Mammary epithelial cell (primary cell): ENCODE measurements at regions of chr11 and their contacts with region 1.

Region 1: GRCh38 chr11:44936525-44936924 is 14.2 kb downstream of the TP53I11 start:
- DNase-seq: peak; percentile 50
- H3K4me3 ChIP-seq: no peak overlapping the region
- H3K27ac ChIP-seq: no peak overlapping the region
- H3K4me1 ChIP-seq: no peaks in the 10 kb centered on the region
- H3K27me3 ChIP-seq: no peaks in the 10 kb centered on the region
- CTCF ChIP-seq: peak; percentile 82 to 94

Region 2: GRCh38 chr11:44952500-44953260 is 16.2 kb after region 1 on chr11:
- CTCF ChIA-PET with region 1: interaction called, 13 read pairs
- dilution Hi-C with region 1: no loop called
- in situ Hi-C with region 1: no loop called
- intact Hi-C with region 1: no loop called
- DNase-seq: no peak
- H3K4me3 ChIP-seq: no peak overlapping the region
- H3K27ac ChIP-seq: no peak overlapping the region
- H3K4me1 ChIP-seq: peaks cover 14% of the 10 kb centered on the region
- H3K27me3 ChIP-seq: no peaks in the 10 kb centered on the region
- CTCF ChIP-seq: no peak

Region 3: DNA sequence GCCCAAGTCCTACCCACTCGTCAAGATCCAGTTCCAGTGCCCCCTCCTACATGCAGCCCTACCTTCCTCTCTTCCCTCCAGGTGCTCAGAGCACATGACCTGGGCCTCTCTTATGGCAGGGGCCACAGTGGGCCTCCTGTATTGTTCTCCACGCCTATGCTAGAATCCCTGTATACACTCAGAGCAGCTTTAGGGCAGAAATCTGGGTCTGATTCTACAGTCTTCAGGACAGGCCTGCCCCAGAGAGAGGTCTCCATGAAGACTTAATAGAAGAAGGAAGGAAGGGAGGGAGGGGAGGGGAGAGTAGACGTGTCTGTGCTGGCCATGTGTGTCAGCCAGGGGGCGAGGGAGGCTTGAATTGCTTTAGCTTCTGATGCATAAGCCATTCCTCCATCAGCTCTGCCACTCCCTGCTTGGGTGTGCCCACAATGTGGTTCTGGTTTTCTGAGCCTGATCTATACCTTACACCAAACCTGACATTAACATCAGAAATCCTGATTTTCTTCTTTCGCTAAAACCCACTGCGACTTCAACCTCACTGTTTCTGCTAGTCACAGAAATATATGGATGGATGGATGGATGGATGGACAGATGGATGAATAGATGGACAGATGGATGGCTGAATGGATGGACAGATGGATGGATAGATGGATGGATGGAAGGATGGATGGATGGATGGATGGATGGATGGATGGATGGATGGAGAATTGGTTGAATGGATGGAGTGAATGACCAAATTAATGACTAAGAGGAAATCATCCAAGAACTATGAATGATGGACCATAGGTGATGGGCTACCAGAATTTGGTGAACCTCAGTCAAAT is 153.4 kb after region 1 on chr11:
- CTCF ChIA-PET with region 1: interaction called, 10 read pairs
- dilution Hi-C with region 1: loop called (anchors 5 kb)
- in situ Hi-C with region 1: loop called in 1 of 2 experiments (anchors 5 kb)
- intact Hi-C with region 1: loop called (anchors 1 kb)
- DNase-seq: peak; percentile 40
- H3K4me3 ChIP-seq: no peak overlapping the region
- H3K27ac ChIP-seq: peak overlapping the region; percentile 15
- H3K4me1 ChIP-seq: peaks cover 16% of the 10 kb centered on the region
- H3K27me3 ChIP-seq: no peaks in the 10 kb centered on the region
- CTCF ChIP-seq: peak in 1 of 2 donors; percentile 24

Region 4: GRCh38 chr11:45097721-45098493 is 161.4 kb after region 1 on chr11:
- CTCF ChIA-PET with region 1: interaction called, 7 read pairs
- dilution Hi-C with region 1: loop called (anchors 5 kb)
- in situ Hi-C with region 1: loop called in 1 of 2 experiments (anchors 5 kb)
- intact Hi-C with region 1: loop called (anchors 1 kb)
- DNase-seq: peak; percentile 51
- H3K4me3 ChIP-seq: no peak overlapping the region
- H3K27ac ChIP-seq: no peak overlapping the region
- H3K4me1 ChIP-seq: peaks cover 20% of the 10 kb centered on the region
- H3K27me3 ChIP-seq: no peaks in the 10 kb centered on the region
- CTCF ChIP-seq: no peak

Region 5: DNA sequence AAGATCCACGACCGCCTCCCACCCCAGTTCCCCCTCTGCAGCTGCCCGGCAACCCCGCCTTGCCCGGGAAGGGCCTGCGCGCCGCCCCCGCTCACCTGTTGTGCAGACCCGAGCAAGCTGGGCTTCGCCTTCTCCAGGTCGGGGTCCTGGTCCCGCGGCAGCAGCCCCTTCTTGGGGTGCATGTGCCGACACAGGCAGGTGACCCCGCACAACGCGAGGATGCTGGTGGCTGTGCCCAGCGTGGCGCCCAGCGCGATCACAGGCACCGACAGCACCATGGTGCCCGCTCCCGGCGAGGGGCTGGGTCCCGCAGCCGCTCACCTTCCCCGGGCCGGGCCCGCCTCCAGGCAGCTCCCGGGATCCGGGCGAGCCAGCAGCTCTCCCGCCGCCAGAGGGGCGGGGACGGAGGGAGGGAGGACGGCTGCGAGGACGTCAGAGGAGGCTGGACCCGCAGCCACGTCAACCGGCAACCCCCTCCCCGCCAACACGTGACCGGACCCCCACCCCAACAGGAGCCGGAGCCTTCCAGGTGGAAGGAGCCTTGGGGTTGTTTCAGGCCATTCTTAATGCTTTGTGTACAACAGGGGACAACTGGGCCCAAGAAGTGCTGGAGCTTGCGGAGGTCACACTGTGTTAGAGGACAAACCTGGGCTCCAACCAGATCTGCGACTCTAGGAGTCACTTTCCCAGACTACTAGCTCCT is 349.6 kb after region 1 on chr11 and contains the start of gene SYT13:
- CTCF ChIA-PET with region 1: no interaction called
- dilution Hi-C with region 1: no loop called
- in situ Hi-C with region 1: loop called in 1 of 2 experiments (anchors 25 kb)
- intact Hi-C with region 1: no loop called
- DNase-seq: no peak
- H3K4me3 ChIP-seq: no peak within 1 kb of the TSS
- H3K27ac ChIP-seq: no peak within 1 kb of the TSS
- H3K4me1 ChIP-seq: peaks cover 4% of the 10 kb centered on the region
- H3K27me3 ChIP-seq: peaks cover 9% of the 10 kb centered on the region
- CTCF ChIP-seq: no peak
- total RNA-seq, gene SYT13: 0.33 TPM in 1 of 2 donors, not detected in the other

Region 6: DNA sequence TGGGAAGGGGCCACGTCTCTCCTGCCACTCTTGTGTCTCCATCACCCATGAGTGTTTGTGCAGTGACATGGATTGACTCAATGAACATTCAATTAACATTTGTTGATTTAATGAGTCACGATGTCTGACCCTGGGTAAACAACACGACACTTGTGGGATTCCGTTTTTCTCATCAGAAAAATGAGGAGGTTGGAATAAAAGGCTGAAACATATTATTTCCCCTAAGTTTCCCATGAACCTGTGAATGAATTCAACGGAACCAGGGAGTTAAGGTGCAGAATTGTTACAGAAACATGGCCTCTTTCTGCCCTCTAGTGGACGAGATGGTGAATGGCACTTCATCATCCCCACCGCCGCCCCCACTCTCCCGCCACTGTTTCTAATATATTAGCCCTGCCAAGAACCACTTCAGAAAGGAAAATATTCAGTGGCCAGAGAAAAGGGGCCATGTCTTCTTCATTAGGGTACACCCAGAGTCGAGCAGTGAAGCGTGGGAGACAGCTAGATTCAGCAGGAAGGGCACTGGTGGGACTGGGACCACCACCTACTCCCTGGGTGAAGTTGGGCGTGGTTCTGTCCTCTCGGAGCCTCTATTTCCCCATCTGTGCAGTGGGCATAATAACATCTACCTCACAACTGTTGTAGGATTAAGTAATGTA is 395.9 kb after region 1 on chr11:
- CTCF ChIA-PET with region 1: no interaction called
- dilution Hi-C with region 1: loop called (anchors 5 kb)
- in situ Hi-C with region 1: no loop called
- intact Hi-C with region 1: no loop called
- DNase-seq: no peak
- H3K4me3 ChIP-seq: no peak overlapping the region
- H3K27ac ChIP-seq: no peak overlapping the region
- H3K4me1 ChIP-seq: no peaks in the 10 kb centered on the region
- H3K27me3 ChIP-seq: no peaks in the 10 kb centered on the region
- CTCF ChIP-seq: peak; percentile 38 to 60